Breast epithelium (tissue), 4 donors: ENCODE measurements at regions of chr14 and their contacts with region 1.

Region 1: GRCh38 chr14:65879248-65880009 is 466.9 kb downstream of the FUT8 start:
- DNase-seq: no peak
- H3K4me3 ChIP-seq: no peak overlapping the region
- H3K27ac ChIP-seq: no peak overlapping the region
- H3K4me1 ChIP-seq: no peaks in the 10 kb centered on the region
- H3K27me3 ChIP-seq: no peaks in the 10 kb centered on the region
- CTCF ChIP-seq: no peak
- POLR2A ChIP-seq: no peak

Region 2: GRCh38 chr14:64089920-64090319 is 1789.5 kb before region 1 on chr14:
- intact Hi-C with region 1: no loop called
- DNase-seq: no peak
- H3K4me3 ChIP-seq: no peak overlapping the region
- H3K27ac ChIP-seq: no peak overlapping the region
- H3K4me1 ChIP-seq: no peaks in the 10 kb centered on the region
- H3K27me3 ChIP-seq: no peaks in the 10 kb centered on the region
- CTCF ChIP-seq: no peak
- POLR2A ChIP-seq: no peak

Region 3: GRCh38 chr14:65920996-65921395 is 41.6 kb after region 1 on chr14:
- intact Hi-C with region 1: loop called (anchors 2 kb)
- DNase-seq: no peak
- H3K4me3 ChIP-seq: no peak overlapping the region
- H3K27ac ChIP-seq: no peak overlapping the region
- H3K4me1 ChIP-seq: no peaks in the 10 kb centered on the region
- H3K27me3 ChIP-seq: no peaks in the 10 kb centered on the region
- CTCF ChIP-seq: no peak
- POLR2A ChIP-seq: no peak